B cell (primary cell): ENCODE measurements at regions of chr5 and their contacts with region 1.

Region 1: DNA sequence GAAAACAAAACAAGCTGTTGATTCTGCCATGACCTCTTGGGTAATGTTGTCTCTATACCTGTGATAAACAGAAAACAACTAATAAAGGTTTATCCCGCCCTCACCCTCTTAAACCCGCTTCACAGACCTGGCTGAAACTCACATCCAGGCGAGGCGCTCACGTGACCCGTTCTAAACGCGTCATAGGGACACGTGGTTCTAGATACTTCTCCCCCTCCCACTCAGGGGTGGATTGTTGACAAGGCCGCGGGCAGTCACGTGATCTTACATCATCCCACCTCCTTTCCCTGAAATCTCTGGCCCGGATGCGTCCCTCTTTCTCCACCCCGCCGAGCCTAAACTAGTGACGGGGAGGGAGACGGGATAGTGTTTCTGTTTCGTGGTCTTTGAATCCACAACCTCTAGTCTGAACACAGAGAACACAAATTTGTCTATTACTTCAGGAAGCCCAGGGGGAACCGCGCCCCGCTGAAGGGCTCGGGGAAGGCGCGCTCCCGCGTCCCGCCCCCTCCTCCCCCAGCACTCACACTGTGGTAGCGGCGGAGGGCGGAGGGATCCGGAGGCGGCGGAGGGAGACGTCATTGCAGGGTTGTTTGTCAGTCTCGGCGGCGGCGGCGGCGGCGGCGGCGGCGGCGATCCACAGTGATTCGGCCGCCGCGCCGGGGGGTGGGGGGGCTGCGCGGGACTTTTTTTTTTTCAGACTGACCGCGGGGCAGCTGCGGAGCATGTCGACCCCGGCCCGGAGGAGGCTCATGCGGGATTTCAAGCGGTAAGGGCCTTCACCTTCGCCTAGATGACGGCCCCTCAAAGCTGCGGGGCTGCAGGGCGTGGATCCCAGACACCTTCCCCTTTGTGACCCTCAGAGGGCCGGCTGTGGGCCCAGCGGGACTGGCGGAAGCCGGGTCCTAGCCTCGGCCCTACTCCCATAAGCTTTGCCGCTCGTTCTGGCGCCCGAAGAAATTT is at the start of gene UBE2B:
- DNase-seq: peak; percentile 99
- ATAC-seq: peak; percentile 79
- H3K4me3 ChIP-seq: peak within 1 kb of the TSS; percentile 78 to 99 (median 92)
- H3K4me3 Mint-ChIP-seq: peak within 1 kb of the TSS; percentile 98
- H3K27ac ChIP-seq: peak within 1 kb of the TSS; percentile 97 to 99
- H3K27ac Mint-ChIP-seq: peak within 1 kb of the TSS; percentile 100
- H3K4me1 ChIP-seq: peaks cover 24 to 32% of the 10 kb centered on the region in 2 donors
- H3K4me1 Mint-ChIP-seq: peaks cover 48% of the 10 kb centered on the region
- H3K27me3 ChIP-seq: no peaks in the 10 kb centered on the region
- H3K27me3 Mint-ChIP-seq: no peaks in the 10 kb centered on the region
- CTCF ChIP-seq: no peak
- total RNA-seq, gene UBE2B: 106 and 110 TPM in 2 replicates

Region 2: GRCh38 chr5:134225618-134226440 is 145.3 kb before region 1 on chr5 and contains the start of gene PPP2CA:
- CTCF ChIA-PET with region 1: no interaction called
- POLR2A ChIA-PET with region 1: interaction called, 3 read pairs
- intact Hi-C with region 1: loop called (anchors 1 kb)
- DNase-seq: peak; percentile 100
- ATAC-seq: peak; percentile 77
- H3K4me3 ChIP-seq: peak within 1 kb of the TSS; percentile 87 to 100 (median 98)
- H3K4me3 Mint-ChIP-seq: peak within 1 kb of the TSS; percentile 94
- H3K27ac ChIP-seq: peak within 1 kb of the TSS; percentile 95 to 100
- H3K27ac Mint-ChIP-seq: peak within 1 kb of the TSS; percentile 99
- H3K4me1 ChIP-seq: peaks cover 36% of the 10 kb centered on the region in 2 donors
- H3K4me1 Mint-ChIP-seq: peaks cover 51% of the 10 kb centered on the region
- H3K27me3 ChIP-seq: no peaks in the 10 kb centered on the region
- H3K27me3 Mint-ChIP-seq: no peaks in the 10 kb centered on the region
- CTCF ChIP-seq: peak; percentile 27
- total RNA-seq, gene PPP2CA: 86.2 and 100 TPM in 2 replicates

Region 3: DNA sequence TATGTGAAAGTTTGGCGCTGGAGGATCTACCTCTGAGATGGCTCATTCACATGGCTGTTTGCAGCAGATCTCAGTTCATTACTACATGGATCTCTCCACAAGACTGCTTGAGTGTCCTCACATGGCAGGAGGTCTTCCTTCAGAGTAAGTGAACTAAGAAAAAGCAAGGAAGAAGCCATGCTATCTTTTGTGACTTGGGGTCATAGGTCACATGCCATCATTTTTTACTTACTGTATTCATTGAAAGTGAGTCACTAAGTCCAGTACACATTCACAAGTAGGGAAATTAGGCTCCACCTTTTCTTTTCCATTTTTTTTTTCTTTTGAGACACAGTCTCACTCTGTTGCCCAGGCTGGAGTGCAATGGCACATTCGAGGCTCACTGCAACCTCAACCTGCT is 49.2 kb after region 1 on chr5:
- CTCF ChIA-PET with region 1: no interaction called
- POLR2A ChIA-PET with region 1: no interaction called
- intact Hi-C with region 1: no loop called
- DNase-seq: no peak
- ATAC-seq: no peak
- H3K4me3 ChIP-seq: no peak overlapping the region
- H3K4me3 Mint-ChIP-seq: no peak overlapping the region
- H3K27ac ChIP-seq: no peak overlapping the region
- H3K27ac Mint-ChIP-seq: no peak overlapping the region
- H3K4me1 ChIP-seq: no peaks in the 10 kb centered on the region
- H3K4me1 Mint-ChIP-seq: no peaks in the 10 kb centered on the region
- H3K27me3 ChIP-seq: no peaks in the 10 kb centered on the region
- H3K27me3 Mint-ChIP-seq: no peaks in the 10 kb centered on the region
- CTCF ChIP-seq: no peak

Region 4: GRCh38 chr5:134436523-134437339 is 65.6 kb after region 1 on chr5:
- CTCF ChIA-PET with region 1: no interaction called
- POLR2A ChIA-PET with region 1: no interaction called
- intact Hi-C with region 1: loop called (anchors 2 kb)
- DNase-seq: peak; percentile 76
- ATAC-seq: peak; percentile 96
- H3K4me3 ChIP-seq: peak overlapping the region in 2 of 5 experiments; percentile 18 to 44
- H3K4me3 Mint-ChIP-seq: peak overlapping the region; percentile 53
- H3K27ac ChIP-seq: peak overlapping the region; percentile 43 to 64
- H3K27ac Mint-ChIP-seq: peak overlapping the region; percentile 70
- H3K4me1 ChIP-seq: peaks cover 12 to 17% of the 10 kb centered on the region in 2 donors
- H3K4me1 Mint-ChIP-seq: peaks cover 30% of the 10 kb centered on the region
- H3K27me3 ChIP-seq: peaks cover 0 to 3% (median 0%) of the 10 kb centered on the region in 4 experiments
- H3K27me3 Mint-ChIP-seq: no peaks in the 10 kb centered on the region
- CTCF ChIP-seq: no peak

Region 5: GRCh38 chr5:134541736-134542376 is 170.7 kb after region 1 on chr5:
- CTCF ChIA-PET with region 1: no interaction called
- POLR2A ChIA-PET with region 1: interaction called, 14 read pairs
- intact Hi-C with region 1: loop called (anchors 5 kb)
- DNase-seq: no peak
- ATAC-seq: no peak
- H3K4me3 ChIP-seq: no peak overlapping the region
- H3K4me3 Mint-ChIP-seq: peak overlapping the region; percentile 78
- H3K27ac ChIP-seq: peak overlapping the region; percentile 87 to 95
- H3K27ac Mint-ChIP-seq: peak overlapping the region; percentile 91
- H3K4me1 ChIP-seq: peaks cover 74 to 75% of the 10 kb centered on the region in 2 donors
- H3K4me1 Mint-ChIP-seq: peaks cover 70% of the 10 kb centered on the region
- H3K27me3 ChIP-seq: no peaks in the 10 kb centered on the region
- H3K27me3 Mint-ChIP-seq: no peaks in the 10 kb centered on the region
- CTCF ChIP-seq: no peak

Region 6: GRCh38 chr5:134586866-134587524 is 215.8 kb after region 1 on chr5:
- CTCF ChIA-PET with region 1: interaction called, 14 read pairs
- POLR2A ChIA-PET with region 1: interaction called, 3 read pairs
- intact Hi-C with region 1: loop called (anchors 2 kb)
- DNase-seq: peak; percentile 82
- ATAC-seq: peak; percentile 89
- H3K4me3 ChIP-seq: peak overlapping the region in 1 of 5 experiments; percentile 33
- H3K4me3 Mint-ChIP-seq: peak overlapping the region; percentile 49
- H3K27ac ChIP-seq: no peak overlapping the region
- H3K27ac Mint-ChIP-seq: no peak overlapping the region
- H3K4me1 ChIP-seq: peaks cover 3 to 5% of the 10 kb centered on the region in 2 donors
- H3K4me1 Mint-ChIP-seq: peaks cover 21% of the 10 kb centered on the region
- H3K27me3 ChIP-seq: no peaks in the 10 kb centered on the region
- H3K27me3 Mint-ChIP-seq: no peaks in the 10 kb centered on the region
- CTCF ChIP-seq: peak; percentile 86

Region 7: DNA sequence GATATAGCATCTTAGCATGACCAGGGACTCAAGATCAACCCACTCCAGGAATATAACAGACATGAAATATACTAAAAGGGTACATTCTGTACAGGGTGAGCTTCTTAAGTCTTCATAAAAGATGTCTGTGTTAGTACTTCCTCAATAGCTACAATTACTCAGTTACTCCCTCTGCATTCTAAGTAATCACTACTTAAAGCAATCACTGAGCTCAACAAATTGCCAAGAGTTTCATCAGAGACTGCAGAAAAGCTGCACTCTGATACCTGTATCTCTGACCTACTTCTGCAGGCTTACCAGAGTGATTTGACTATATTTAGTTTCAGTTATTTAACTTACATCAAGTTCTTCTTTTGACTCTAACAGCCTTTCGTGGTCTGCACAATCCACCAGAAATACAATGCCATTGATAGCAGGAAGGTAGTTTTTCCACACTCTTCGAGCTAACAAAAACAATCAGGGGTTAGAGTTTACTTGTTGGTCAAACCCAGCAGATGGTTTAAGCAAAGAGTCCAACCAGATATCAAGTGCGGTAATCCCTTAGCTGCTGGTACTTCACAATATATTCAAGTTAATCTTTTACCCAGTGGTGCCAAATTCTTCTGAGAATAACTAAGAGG is 238.2 kb after region 1 on chr5:
- CTCF ChIA-PET with region 1: no interaction called
- POLR2A ChIA-PET with region 1: no interaction called
- intact Hi-C with region 1: no loop called
- DNase-seq: no peak
- ATAC-seq: no peak
- H3K4me3 ChIP-seq: no peak overlapping the region
- H3K4me3 Mint-ChIP-seq: no peak overlapping the region
- H3K27ac ChIP-seq: no peak overlapping the region
- H3K27ac Mint-ChIP-seq: no peak overlapping the region
- H3K4me1 ChIP-seq: no peaks in the 10 kb centered on the region
- H3K4me1 Mint-ChIP-seq: no peaks in the 10 kb centered on the region
- H3K27me3 ChIP-seq: no peaks in the 10 kb centered on the region
- H3K27me3 Mint-ChIP-seq: no peaks in the 10 kb centered on the region
- CTCF ChIP-seq: no peak

Region 8: DNA sequence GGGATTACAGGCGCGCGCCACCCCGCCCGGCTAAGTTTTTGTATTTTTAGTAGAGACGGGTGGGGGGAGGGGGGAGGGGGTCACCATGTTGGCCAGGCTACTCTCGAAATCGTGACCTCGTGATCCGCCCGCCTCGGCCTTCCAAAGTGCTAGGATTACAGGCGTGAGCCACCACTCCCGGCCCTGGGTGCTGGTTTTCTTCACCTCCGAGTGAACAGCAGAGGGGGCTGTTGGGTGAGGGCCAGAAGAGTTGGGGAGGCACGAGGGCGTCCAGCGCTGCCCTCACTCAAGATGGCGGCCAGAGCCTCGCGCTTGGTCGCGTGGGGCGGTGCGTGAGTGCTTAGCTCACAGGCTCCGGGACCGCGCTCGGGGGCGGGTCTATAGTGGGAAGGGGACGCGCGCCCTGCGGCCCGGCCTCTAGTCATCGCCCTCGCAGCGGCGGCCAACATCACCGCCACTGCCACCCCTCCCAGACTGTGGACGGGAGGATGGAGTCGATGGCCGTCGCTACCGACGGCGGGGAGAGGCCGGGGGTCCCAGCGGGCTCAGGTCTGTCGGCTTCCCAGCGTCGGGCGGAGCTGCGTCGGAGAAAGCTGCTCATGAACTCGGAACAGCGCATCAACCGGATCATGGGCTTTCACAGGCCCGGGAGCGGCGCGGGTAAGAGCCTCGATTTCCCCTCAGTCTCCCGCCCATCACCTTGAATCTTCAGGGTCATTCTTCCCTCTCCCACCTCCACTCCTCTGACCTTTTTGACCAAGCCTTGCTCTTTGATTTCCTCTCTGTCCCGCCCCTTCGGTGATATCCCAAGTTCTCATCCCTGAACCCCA is 367.2 kb after region 1 on chr5 and contains the start of gene CAMLG:
- CTCF ChIA-PET with region 1: no interaction called
- POLR2A ChIA-PET with region 1: no interaction called
- intact Hi-C with region 1: loop called (anchors 1 kb)
- DNase-seq: peak; percentile 98
- ATAC-seq: peak; percentile 97
- H3K4me3 ChIP-seq: peak within 1 kb of the TSS; percentile 69 to 94 (median 89)
- H3K4me3 Mint-ChIP-seq: peak within 1 kb of the TSS; percentile 90
- H3K27ac ChIP-seq: peak within 1 kb of the TSS; percentile 77 to 89
- H3K27ac Mint-ChIP-seq: peak within 1 kb of the TSS; percentile 89
- H3K4me1 ChIP-seq: peaks cover 24 to 42% of the 10 kb centered on the region in 2 donors
- H3K4me1 Mint-ChIP-seq: peaks cover 33% of the 10 kb centered on the region
- H3K27me3 ChIP-seq: no peaks in the 10 kb centered on the region
- H3K27me3 Mint-ChIP-seq: no peaks in the 10 kb centered on the region
- CTCF ChIP-seq: peak; percentile 77
- total RNA-seq, gene CAMLG: 27.5 and 29.7 TPM in 2 replicates